ENCODE measurements at regions of chr2 and their contacts with region 1.

Region 1: DNA sequence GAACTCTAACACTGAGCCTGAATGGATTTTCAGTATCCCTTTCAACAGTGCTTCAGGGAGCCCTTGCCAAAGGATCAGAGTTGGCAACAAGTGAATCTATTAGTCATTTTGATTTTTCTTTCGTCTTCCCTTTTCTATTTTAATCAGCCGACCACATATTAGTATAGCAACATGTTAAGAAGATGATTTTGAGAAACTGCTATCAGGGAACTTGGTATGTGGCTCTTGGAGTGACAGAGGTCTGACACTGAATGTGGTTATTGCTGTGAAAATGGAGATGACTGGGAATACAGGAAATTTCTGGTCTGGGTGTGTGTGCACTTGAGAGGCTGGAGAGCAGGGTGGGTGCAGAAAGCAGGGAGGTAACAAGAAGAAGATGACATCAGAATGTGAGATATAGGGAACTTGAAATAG is 28.7 kb upstream of the IL1RL1 start:
- DNase-seq: no peak
- H3K4me3 ChIP-seq: no peak overlapping the region
- H3K27ac ChIP-seq: no peak overlapping the region
- H3K4me1 ChIP-seq: no peaks in the 10 kb centered on the region
- H3K27me3 ChIP-seq: no peaks in the 10 kb centered on the region
- CTCF ChIP-seq: no peak
- EP300 ChIP-seq: no peak
- POLR2A ChIP-seq: no peak

Region 2: GRCh38 chr2:102355526-102356380 is 73.1 kb after region 1 on chr2 and contains the start of gene IL18R1:
- intact Hi-C with region 1: loop called in 1 of 4 experiments (anchors 10 kb)
- DNase-seq: peak; percentile 66 to 84 (median 73)
- H3K4me3 ChIP-seq: peak within 1 kb of the TSS; percentile 69
- H3K27ac ChIP-seq: peak within 1 kb of the TSS; percentile 17 to 28
- H3K4me1 ChIP-seq: no peaks in the 10 kb centered on the region
- H3K27me3 ChIP-seq: no peaks in the 10 kb centered on the region
- CTCF ChIP-seq: peak; percentile 43 to 67 (median 61)
- EP300 ChIP-seq: no peak
- POLR2A ChIP-seq: no peak
- total RNA-seq, gene IL18R1: 0.83 to 3.1 (median 1.7) TPM

Region 3: DNA sequence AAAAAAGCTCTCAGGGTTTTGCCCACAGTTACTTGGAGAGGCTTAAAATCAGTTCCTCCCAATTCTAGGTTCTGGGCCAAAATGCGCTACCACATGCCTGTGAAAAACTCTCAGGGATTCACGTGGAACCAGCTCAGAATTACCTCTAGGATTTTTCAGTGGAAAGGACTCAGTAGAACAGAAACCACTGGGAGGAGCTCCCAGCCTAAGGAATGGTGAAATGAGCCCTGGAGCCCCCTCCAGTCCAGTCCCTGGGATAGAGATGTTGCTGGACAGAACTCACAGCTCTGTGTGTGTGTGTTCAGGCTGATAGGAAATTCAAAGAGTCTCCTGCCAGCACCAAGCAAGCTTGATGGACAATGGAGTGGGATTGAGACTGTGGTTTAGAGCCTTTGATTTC is 169.3 kb after region 1 on chr2:
- intact Hi-C with region 1: no loop called
- DNase-seq: no peak
- H3K4me3 ChIP-seq: no peak overlapping the region
- H3K27ac ChIP-seq: no peak overlapping the region
- H3K4me1 ChIP-seq: no peaks in the 10 kb centered on the region
- H3K27me3 ChIP-seq: no peaks in the 10 kb centered on the region
- CTCF ChIP-seq: no peak
- EP300 ChIP-seq: no peak
- POLR2A ChIP-seq: no peak